Mammary epithelial cell (primary cell): ENCODE measurements at regions of chr7 and their contacts with region 1.

Region 1: DNA sequence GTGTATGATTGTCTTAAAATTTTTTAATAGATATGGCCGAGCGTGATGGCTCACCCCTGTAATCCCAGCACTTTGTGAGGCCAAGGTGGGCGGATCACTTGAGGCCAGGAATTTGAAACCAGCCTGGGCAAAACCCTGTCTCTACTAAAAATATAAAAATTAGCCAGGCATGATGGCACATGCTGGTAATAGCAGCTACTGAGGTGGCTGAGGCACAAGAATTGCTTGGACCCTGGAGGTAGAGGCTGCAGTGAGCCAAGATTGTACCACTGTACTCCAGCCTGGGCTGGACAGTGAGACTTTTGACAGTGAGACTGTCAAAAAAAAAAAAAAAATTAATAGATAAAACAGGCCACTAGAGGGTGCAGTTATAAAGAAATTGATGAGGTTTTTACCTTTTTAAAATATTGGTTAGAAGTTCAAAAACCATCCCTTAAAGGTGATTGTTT is 20.5 kb downstream of the NOM1 start:
- DNase-seq: peak; percentile 85
- H3K4me3 ChIP-seq: no peak overlapping the region
- H3K27ac ChIP-seq: peak overlapping the region; percentile 72
- H3K4me1 ChIP-seq: peaks cover 29% of the 10 kb centered on the region
- H3K27me3 ChIP-seq: no peaks in the 10 kb centered on the region
- CTCF ChIP-seq: peak in 1 of 2 donors; percentile 28

Region 2: DNA sequence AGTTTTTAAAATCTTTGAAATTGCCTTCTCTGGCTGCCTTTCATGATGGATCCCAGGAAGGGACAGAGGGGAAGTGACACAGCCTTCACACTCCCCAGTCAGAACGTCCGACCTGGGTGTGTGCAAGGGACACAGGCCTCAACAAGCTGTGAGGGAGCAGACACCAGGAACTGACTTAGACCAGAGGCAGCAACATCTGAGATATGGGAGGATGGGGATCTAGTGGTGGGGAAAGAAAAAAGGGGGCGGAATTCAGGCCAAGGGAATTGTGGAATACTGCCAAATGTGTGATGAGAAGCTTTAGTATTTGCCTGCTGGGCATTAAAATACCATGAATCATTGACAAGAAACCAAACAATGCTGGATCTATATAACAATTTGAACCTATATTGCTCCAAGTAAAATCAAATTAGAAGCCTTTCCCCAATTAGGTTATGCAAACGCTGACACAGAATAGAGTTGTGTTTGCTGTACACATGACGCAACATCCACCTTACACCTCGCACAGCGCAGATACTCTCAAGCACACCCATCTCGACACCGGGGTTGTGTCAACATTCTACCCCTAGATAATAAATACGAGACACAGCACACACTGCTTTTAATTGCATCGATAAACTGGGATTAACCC is 57.7 kb after region 1 on chr7:
- CTCF ChIA-PET with region 1: no interaction called
- dilution Hi-C with region 1: loop called (anchors 5 kb)
- in situ Hi-C with region 1: no loop called
- intact Hi-C with region 1: no loop called
- DNase-seq: peak; percentile 98
- H3K4me3 ChIP-seq: no peak overlapping the region
- H3K27ac ChIP-seq: peak overlapping the region; percentile 26
- H3K4me1 ChIP-seq: peaks cover 12% of the 10 kb centered on the region
- H3K27me3 ChIP-seq: no peaks in the 10 kb centered on the region
- CTCF ChIP-seq: no peak

Region 3: GRCh38 chr7:157224627-157225026 is 254.6 kb after region 1 on chr7:
- CTCF ChIA-PET with region 1: interaction called, 17 read pairs
- dilution Hi-C with region 1: no loop called
- in situ Hi-C with region 1: no loop called
- intact Hi-C with region 1: no loop called
- DNase-seq: no peak
- H3K4me3 ChIP-seq: no peak overlapping the region
- H3K27ac ChIP-seq: no peak overlapping the region
- H3K4me1 ChIP-seq: no peaks in the 10 kb centered on the region
- H3K27me3 ChIP-seq: no peaks in the 10 kb centered on the region
- CTCF ChIP-seq: peak in 1 of 2 donors; percentile 27

Region 4: GRCh38 chr7:157250605-157251228 is 280.7 kb after region 1 on chr7:
- CTCF ChIA-PET with region 1: interaction called, 6 read pairs
- dilution Hi-C with region 1: no loop called
- in situ Hi-C with region 1: no loop called
- intact Hi-C with region 1: loop called (anchors 1 kb)
- DNase-seq: peak; percentile 51
- H3K4me3 ChIP-seq: no peak overlapping the region
- H3K27ac ChIP-seq: no peak overlapping the region
- H3K4me1 ChIP-seq: no peaks in the 10 kb centered on the region
- H3K27me3 ChIP-seq: no peaks in the 10 kb centered on the region
- CTCF ChIP-seq: peak; percentile 81 to 85

Region 5: GRCh38 chr7:157263156-157263555 is 293.2 kb after region 1 on chr7:
- CTCF ChIA-PET with region 1: no interaction called
- dilution Hi-C with region 1: loop called (anchors 5 kb)
- in situ Hi-C with region 1: no loop called
- intact Hi-C with region 1: no loop called
- DNase-seq: no peak
- H3K4me3 ChIP-seq: no peak overlapping the region
- H3K27ac ChIP-seq: no peak overlapping the region
- H3K4me1 ChIP-seq: peaks cover under 1% of the 10 kb centered on the region
- H3K27me3 ChIP-seq: no peaks in the 10 kb centered on the region
- CTCF ChIP-seq: no peak